Activated CD8-positive, alpha-beta T cell treated with anti-CD3 and anti-CD28 coated beads for 36 hours (primary cell): ENCODE measurements at regions of chr3 and their contacts with region 1.

Region 1: GRCh38 chr3:129996073-129996472 is 21.6 kb downstream of the TRH start:
- DNase-seq: no peak
- ATAC-seq: no peak
- H3K4me3 Mint-ChIP-seq: no peak overlapping the region
- H3K27ac Mint-ChIP-seq: no peak overlapping the region
- H3K4me1 Mint-ChIP-seq: no peaks in the 10 kb centered on the region
- H3K27me3 Mint-ChIP-seq: peaks cover 9% of the 10 kb centered on the region
- CTCF ChIP-seq: no peak

Region 2: DNA sequence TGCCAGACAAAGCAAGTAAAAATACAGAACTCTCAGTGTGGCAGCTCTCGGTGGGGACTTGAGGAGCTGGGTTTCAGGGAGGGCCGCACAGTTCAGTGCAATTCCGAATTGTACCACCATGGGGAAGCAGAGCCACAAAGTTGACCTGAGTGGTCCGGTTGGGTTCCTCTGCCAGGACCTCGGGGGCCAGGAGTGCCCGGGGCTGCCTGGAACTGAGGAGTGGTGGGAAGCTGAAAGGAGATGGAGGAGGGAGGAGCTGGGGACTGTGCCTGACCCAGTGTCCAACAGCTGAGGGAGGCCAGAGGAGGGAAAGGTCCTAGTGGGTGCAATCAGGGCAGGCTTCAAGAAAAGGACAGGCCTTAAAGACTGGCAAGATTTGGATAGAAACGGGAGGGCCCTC is 53.8 kb before region 1 on chr3:
- CTCF ChIA-PET with region 1: interaction called, 15 read pairs
- POLR2A ChIA-PET with region 1: no interaction called
- intact Hi-C with region 1: no loop called
- DNase-seq: peak; percentile 66
- ATAC-seq: peak; percentile 92
- H3K4me3 Mint-ChIP-seq: no peak overlapping the region
- H3K27ac Mint-ChIP-seq: no peak overlapping the region
- H3K4me1 Mint-ChIP-seq: no peaks in the 10 kb centered on the region
- H3K27me3 Mint-ChIP-seq: peaks cover 3% of the 10 kb centered on the region
- CTCF ChIP-seq: peak; percentile 64

Region 3: GRCh38 chr3:129961134-129961541 is 34.9 kb before region 1 on chr3:
- CTCF ChIA-PET with region 1: no interaction called
- POLR2A ChIA-PET with region 1: no interaction called
- intact Hi-C with region 1: no loop called
- DNase-seq: no peak
- ATAC-seq: no peak
- H3K4me3 Mint-ChIP-seq: no peak overlapping the region
- H3K27ac Mint-ChIP-seq: no peak overlapping the region
- H3K4me1 Mint-ChIP-seq: no peaks in the 10 kb centered on the region
- H3K27me3 Mint-ChIP-seq: no peaks in the 10 kb centered on the region
- CTCF ChIP-seq: no peak